ENCODE measurements at regions of chr6 and their contacts with region 1.

Region 1: DNA sequence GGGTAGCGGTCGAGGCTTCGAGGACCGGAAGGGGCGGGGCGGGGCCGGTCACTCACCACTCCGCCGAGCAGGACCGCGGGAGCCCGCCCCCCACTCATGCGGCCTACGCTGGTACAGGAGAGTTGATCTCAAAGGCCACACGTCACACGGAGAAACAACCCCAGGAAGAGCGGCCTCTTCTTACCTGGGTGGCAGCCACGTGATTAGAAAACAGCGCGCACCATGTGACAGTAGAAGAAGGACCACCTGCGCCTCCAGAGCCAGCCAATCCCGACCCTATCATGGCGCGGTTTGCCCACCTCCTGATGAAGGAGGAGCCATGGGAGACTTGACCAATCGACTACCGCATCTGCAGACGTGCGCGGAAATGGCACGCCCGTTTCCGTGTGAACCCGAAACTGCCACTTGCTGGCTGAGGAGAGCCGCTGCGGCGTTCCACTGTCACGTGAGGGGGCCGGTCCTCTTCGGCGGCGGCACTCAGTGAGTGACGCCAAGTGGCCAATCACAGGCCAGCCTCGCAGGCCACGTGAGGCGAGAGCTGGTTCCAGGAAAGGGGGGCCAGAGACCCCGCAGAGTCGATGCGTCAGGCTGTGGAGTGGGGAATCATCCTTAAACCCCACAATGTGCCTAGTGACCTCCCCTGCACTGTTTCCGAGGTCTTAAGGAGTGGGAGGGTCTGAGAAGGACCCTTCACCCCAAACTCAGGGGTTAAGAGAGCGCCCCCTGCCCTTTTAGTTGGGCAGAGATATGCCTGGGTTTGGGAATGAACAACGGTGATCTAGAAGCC is at the start of gene CUTA:
- DNase-seq: peak; percentile 99
- H3K4me3 Mint-ChIP-seq: peak within 1 kb of the TSS; percentile 94
- H3K27ac Mint-ChIP-seq: peak within 1 kb of the TSS; percentile 98
- H3K4me1 Mint-ChIP-seq: peaks cover 32% of the 10 kb centered on the region
- H3K27me3 Mint-ChIP-seq: no peaks in the 10 kb centered on the region
- CTCF ChIP-seq: peak; percentile 34
- total RNA-seq, gene CUTA: 212 and 231 TPM in 2 replicates

Region 2: DNA sequence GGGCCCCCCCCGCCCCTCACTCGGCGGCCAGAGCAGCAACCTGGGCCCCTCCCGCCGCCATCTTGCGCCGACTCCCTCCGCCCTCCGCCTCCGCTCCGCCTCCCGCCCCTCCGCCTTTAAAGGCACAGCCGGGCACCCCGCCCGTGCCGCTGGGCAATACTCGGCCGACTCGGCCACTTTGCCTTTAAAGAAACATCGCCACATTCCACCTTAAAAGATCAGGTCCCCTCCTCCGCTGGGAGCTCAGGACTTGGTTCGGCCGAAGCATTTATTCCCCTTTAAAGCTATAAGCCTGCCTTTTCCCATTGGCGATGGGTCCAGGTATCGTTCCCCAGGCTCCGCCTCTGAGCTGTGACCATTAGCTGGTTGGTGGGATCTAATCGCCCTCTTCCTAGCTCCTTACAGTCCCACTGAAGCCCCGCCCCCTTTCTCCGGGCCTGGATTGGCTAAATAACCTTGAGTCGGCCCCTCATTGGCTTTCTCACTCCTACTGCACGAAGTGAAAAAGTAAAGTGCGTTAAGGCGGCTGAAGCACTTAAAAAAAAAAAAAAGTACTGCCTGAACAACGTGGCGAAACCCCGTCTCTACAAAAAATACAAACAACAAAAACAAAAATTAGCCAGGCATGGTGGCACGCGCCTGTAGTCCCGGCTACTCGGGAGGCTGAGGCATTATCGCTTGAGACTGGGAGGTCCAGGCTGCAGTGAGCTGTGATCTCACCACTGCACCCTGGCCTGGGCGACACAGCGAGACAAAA is 100.2 kb before region 1 on chr6 and contains the start of gene ZBTB22:
- CTCF ChIA-PET with region 1: interaction called, 3 read pairs
- POLR2A ChIA-PET with region 1: interaction called, 19 read pairs
- intact Hi-C with region 1: no loop called
- DNase-seq: peak; percentile 100
- H3K4me3 Mint-ChIP-seq: peak within 1 kb of the TSS; percentile 81
- H3K27ac Mint-ChIP-seq: peak within 1 kb of the TSS; percentile 80
- H3K4me1 Mint-ChIP-seq: peaks cover 66% of the 10 kb centered on the region
- H3K27me3 Mint-ChIP-seq: no peaks in the 10 kb centered on the region
- CTCF ChIP-seq: no peak
- total RNA-seq, gene ZBTB22: 12.3 and 15.5 TPM in 2 replicates

Region 3: DNA sequence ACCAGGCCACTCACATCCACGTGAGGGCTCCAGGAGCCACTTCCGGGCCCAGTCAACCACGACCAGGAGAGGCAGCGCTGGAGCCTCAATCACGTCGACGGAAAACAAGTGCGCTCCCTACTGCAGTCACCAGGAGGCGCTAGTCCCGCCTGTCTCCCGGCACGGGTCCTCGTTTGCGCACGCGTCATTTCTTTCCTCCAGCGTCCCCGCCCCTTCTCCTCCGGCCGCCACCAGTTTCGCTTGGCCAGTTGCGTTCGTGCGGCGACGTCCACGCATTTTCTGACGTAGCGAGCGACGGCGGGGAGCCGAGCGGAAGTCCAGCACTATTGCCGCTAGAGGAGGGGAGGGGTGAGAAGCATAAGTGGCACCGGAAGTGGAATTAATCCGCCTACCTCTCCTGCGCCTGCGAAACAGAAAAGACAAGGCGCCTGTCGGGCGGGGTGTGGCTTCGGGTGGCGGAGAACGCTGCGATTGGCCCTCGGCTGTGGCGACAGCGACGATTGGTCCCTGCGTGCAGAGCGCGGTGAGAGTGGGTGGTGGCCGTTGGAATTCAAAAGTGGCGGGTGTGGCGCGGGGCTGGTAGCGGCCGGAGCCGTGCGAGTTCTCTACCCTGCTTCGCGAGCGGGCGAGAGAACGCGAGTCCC is 26.7 kb before region 1 on chr6 and contains the start of gene KIFC1:
- CTCF ChIA-PET with region 1: interaction called, 6 read pairs
- POLR2A ChIA-PET with region 1: interaction called, 6 read pairs
- intact Hi-C with region 1: loop called (anchors 2 kb)
- DNase-seq: peak; percentile 99
- H3K4me3 Mint-ChIP-seq: peak within 1 kb of the TSS; percentile 81
- H3K27ac Mint-ChIP-seq: peak within 1 kb of the TSS; percentile 72
- H3K4me1 Mint-ChIP-seq: peaks cover 37% of the 10 kb centered on the region
- H3K27me3 Mint-ChIP-seq: no peaks in the 10 kb centered on the region
- CTCF ChIP-seq: peak; percentile 89
- total RNA-seq, gene KIFC1: 20.3 and 27.1 TPM in 2 replicates

Region 4: DNA sequence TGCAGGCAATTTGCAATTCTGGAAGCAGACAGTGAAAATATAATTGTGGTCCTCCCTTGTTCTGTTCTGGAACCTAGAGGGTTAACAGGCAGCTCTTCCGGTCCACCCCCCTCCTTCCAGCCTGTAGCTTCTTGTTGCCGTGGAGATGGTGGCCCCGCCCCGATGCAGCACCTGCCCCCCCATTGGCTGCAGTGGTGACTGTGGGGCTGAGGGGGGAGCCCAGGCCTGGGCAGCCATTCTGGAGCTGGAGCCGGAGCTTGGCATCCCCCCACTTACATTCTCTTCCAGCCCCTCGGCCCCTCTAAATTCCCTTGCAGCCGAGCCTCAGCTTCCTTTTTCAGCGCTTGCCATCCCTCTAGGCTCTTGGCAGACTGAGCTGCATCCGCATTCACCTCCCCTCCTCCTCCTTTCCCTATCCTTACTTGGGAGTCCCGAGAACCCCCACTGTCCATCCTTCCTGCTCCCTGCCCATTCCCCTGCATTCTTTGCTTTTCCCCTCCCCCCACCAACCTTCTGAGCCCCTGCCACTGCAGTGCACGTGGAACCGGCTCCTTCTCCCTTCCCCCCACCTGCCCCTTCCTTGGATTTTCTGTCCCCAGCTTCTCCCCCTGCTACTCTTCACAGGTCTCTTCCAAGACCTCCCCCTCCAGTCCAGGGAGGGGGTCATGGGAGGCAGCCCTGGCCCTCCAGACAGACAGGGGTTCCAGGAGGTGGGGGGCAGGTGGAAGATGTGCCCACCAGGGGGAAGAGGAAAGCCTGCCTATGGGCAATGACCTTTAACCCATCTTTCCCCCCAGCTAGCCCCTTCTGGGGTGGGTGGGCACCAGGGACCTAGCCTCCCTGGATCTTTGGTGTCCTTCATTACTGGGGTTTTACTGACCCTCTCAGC is 13.1 kb after region 1 on chr6:
- CTCF ChIA-PET with region 1: interaction called, 3 read pairs
- POLR2A ChIA-PET with region 1: interaction called, 35 read pairs
- intact Hi-C with region 1: no loop called
- DNase-seq: no peak
- H3K4me3 Mint-ChIP-seq: no peak overlapping the region
- H3K27ac Mint-ChIP-seq: no peak overlapping the region
- H3K4me1 Mint-ChIP-seq: peaks cover 46% of the 10 kb centered on the region
- H3K27me3 Mint-ChIP-seq: no peaks in the 10 kb centered on the region
- CTCF ChIP-seq: no peak

Region 5: GRCh38 chr6:33454009-33454946 is 36.2 kb after region 1 on chr6 and contains the start of gene ZBTB9:
- CTCF ChIA-PET with region 1: no interaction called
- POLR2A ChIA-PET with region 1: interaction called, 19 read pairs
- intact Hi-C with region 1: no loop called
- DNase-seq: peak; percentile 95
- H3K4me3 Mint-ChIP-seq: peak within 1 kb of the TSS; percentile 89
- H3K27ac Mint-ChIP-seq: peak within 1 kb of the TSS; percentile 72
- H3K4me1 Mint-ChIP-seq: peaks cover 22% of the 10 kb centered on the region
- H3K27me3 Mint-ChIP-seq: no peaks in the 10 kb centered on the region
- CTCF ChIP-seq: no peak
- total RNA-seq, gene ZBTB9: 7.5 and 8.3 TPM in 2 replicates

Region 6: GRCh38 chr6:33570806-33571636 is 152.9 kb after region 1 on chr6:
- CTCF ChIA-PET with region 1: no interaction called
- POLR2A ChIA-PET with region 1: interaction called, 8 read pairs
- intact Hi-C with region 1: loop called (anchors 1 kb)
- DNase-seq: peak; percentile 66
- H3K4me3 Mint-ChIP-seq: peak overlapping the region; percentile 93
- H3K27ac Mint-ChIP-seq: peak overlapping the region; percentile 75
- H3K4me1 Mint-ChIP-seq: peaks cover 15% of the 10 kb centered on the region
- H3K27me3 Mint-ChIP-seq: no peaks in the 10 kb centered on the region
- CTCF ChIP-seq: no peak

Region 7: GRCh38 chr6:33579828-33580714 is 162.0 kb after region 1 on chr6 and contains the start of gene BAK1:
- CTCF ChIA-PET with region 1: no interaction called
- POLR2A ChIA-PET with region 1: interaction called, 20 read pairs
- intact Hi-C with region 1: no loop called
- DNase-seq: peak; percentile 90
- H3K4me3 Mint-ChIP-seq: peak within 1 kb of the TSS; percentile 85
- H3K27ac Mint-ChIP-seq: peak within 1 kb of the TSS; percentile 97
- H3K4me1 Mint-ChIP-seq: peaks cover 28% of the 10 kb centered on the region
- H3K27me3 Mint-ChIP-seq: no peaks in the 10 kb centered on the region
- CTCF ChIP-seq: peak; percentile 42
- total RNA-seq, gene BAK1: 45.8 and 57.7 TPM in 2 replicates

Measured in MCF 10A (cell line).